ENCODE measurements at regions of chr2 and their contacts with region 1.

Region 1: DNA sequence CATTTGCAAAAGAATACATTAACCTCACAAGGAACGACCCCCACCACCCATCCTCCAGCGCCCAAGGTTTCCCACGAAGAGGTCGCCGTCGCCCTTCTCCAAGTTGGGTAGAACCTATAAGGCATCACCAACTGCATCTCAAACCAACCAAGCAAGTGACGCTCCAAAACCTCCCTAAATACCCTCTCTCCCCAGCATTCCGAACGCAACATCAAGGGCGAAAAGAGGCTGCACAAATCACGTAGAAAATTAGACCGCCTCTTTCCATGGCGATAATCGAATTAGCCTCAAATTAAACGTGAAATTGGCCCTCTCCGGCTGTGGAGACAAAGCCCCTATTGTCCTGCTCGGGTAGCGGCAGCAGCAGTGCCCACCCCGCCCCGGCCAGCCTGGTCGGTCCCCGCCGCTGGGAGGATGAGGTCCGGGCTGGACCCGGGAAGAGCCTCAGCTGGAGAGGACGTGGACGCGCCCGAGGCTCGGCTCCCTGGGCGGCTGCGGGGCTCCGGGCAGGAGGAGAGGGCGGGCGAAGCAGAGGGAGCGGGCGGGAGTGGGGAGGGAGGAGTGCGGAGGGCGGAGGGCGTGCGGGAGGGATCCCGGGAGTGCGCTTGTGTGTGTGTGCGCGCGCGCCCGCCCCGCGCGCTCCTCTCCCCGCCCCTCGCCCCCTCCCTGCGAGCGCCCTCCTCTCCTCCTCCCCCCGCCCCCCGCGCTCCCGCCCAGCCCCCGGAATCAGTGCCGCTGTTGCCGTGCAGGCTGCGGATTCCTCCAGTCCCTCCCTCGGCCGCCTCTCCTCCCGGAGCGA is at the start of gene SPTBN1:
- DNase-seq: peak; percentile 87
- ATAC-seq: peak; percentile 86
- H3K4me3 ChIP-seq: peak within 1 kb of the TSS; percentile 93 to 96 (median 93)
- H3K27ac ChIP-seq: peak within 1 kb of the TSS; percentile 82
- H3K4me1 ChIP-seq: peaks cover 40% of the 10 kb centered on the region
- H3K27me3 ChIP-seq: no peaks in the 10 kb centered on the region; a peak in 1 of 5 replicates
- CTCF ChIP-seq: 0 out of 2 replicates have a peak, but pooled peaks have one; percentile 4
- EP300 ChIP-seq: no peak; a peak in 1 of 4 replicates
- POLR2A ChIP-seq: peak; percentile 75 to 77
- RAD21 ChIP-seq: peak; percentile 31; the same call in 1 of the 2 replicates
- total RNA-seq, gene SPTBN1: 139 and 299 TPM in 2 replicates

Region 2: DNA sequence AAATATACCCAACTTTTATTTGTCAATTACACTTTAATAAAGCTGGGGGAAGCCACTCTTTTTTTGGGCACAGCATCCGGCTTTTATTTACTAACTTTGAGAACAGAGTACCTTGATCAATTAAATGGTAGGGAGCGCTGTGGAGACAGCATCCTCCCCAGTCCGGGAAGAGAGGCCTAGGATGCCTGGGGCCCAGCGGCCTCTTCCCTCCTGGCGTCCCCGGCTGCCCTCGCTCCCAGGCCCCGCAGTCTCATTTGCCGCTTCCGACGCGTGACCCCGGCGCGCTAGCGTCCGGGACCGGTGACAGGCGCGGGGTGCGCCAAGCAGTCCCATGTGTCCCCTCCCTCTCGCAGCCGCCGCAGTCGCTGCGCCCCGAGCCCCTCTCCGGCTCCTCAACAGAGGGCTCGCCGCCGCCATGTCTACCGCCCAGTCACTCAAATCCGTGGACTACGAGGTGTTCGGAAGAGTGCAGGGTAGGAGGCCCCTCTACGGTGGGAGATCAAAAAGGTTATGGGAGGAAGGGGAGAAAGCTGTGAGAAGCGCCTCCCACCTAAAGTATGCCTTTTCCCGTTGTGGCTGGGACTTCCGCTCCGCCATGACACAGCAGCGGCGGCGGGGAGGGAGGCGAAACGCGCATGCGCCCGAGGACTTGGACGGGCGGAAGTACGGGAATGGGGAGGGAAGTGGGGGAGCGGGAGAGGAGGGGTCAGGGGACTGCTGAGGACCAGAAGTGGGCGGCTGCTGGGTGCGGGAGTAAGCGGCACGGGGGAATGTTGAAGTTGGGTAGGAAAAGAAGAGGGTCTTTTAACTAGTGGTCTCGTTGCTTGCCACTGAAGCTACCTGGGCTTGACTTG is 340.3 kb before region 1 on chr2 and contains the start of gene ACYP2:
- CTCF ChIA-PET with region 1: no interaction called
- POLR2A ChIA-PET with region 1: no interaction called
- in situ Hi-C with region 1: no loop called
- intact Hi-C with region 1: loop called (anchors 2 kb)
- DNase-seq: peak; percentile 96
- ATAC-seq: peak; percentile 94
- H3K4me3 ChIP-seq: peak within 1 kb of the TSS; percentile 73 to 78 (median 75)
- H3K27ac ChIP-seq: peak within 1 kb of the TSS; percentile 94
- H3K4me1 ChIP-seq: peaks cover 18% of the 10 kb centered on the region
- H3K27me3 ChIP-seq: no peaks in the 10 kb centered on the region
- CTCF ChIP-seq: peak; percentile 60
- EP300 ChIP-seq: 0 out of 4 replicates have a peak, but pooled peaks of 1 of the 2 experiments have one; percentile 10
- POLR2A ChIP-seq: peak; percentile 94 to 98
- RAD21 ChIP-seq: peak; percentile 61
- total RNA-seq, gene ACYP2: 12.3 and 16.2 TPM in 2 replicates

Region 3: DNA sequence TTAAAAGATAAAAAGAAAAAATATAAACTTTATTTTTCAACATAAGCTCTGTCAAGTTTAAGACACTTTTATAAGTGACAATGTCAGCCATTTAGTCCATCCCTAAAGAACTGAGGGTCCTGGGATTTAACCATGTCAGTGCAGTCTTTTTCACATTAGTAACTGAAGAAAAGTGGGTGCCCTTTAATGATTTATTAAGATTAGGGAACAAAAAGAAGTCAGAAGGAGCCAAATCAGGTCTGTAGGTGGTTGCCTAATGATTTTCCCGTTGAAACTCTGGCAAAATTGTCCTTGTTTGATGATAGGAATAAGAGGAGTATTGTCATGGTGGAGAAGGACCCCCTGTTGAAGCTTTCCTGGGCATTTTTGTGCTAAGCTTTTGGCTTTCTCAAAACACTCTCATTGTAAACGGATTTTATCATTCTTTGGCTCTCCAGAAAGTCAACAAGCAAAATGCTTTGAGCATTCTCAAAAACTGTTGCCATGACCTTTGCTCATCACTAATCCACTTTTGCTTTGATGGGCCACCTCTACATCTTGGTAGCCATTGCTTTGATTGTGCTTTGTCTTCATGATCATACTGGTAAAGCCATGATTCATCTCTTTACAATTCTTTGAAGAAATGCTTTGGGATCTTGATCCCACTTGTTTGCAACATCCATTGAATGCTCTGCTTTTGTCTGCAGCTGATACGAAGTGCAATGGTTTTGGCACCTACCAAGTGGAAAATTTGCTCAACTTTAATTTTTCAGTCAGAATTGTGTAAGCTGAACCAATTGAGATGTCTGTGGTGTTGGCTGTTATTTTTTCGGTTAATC is 221.7 kb before region 1 on chr2:
- CTCF ChIA-PET with region 1: no interaction called
- POLR2A ChIA-PET with region 1: no interaction called
- in situ Hi-C with region 1: no loop called
- intact Hi-C with region 1: loop called (anchors 5 kb)
- DNase-seq: peak; percentile 100
- ATAC-seq: peak; percentile 94
- H3K4me3 ChIP-seq: no peak overlapping the region
- H3K27ac ChIP-seq: peak overlapping the region; percentile 81
- H3K4me1 ChIP-seq: peaks cover 43% of the 10 kb centered on the region
- H3K27me3 ChIP-seq: no peaks in the 10 kb centered on the region
- CTCF ChIP-seq: no peak
- EP300 ChIP-seq: peak; percentile 63 to 98; a peak in 3 of 4 replicates
- POLR2A ChIP-seq: no peak
- RAD21 ChIP-seq: no peak

Region 4: DNA sequence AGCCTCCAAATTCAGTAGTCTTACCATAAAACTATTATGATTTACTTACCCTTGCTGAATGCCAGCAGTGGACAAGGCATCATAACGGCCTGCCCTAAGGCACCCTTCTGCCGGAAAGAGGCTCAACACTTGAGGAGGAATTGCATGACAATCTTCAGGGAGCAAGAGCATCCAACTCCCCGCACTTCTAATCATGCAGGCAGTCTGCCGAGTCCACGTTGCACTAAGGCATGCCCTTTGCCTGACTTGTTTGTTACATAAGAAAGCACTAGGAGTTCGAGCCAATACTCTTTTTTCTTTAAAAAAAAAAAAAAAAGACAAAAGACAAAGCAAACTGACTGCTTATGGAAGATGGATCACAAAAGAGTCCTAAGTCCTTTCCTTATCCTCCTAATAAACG is 17.5 kb before region 1 on chr2:
- CTCF ChIA-PET with region 1: no interaction called
- POLR2A ChIA-PET with region 1: no interaction called
- in situ Hi-C with region 1: no loop called
- intact Hi-C with region 1: no loop called
- DNase-seq: no peak
- ATAC-seq: no peak
- H3K4me3 ChIP-seq: no peak overlapping the region
- H3K27ac ChIP-seq: no peak overlapping the region
- H3K4me1 ChIP-seq: peaks cover 23% of the 10 kb centered on the region
- H3K27me3 ChIP-seq: no peaks in the 10 kb centered on the region
- CTCF ChIP-seq: no peak
- EP300 ChIP-seq: no peak
- POLR2A ChIP-seq: no peak
- RAD21 ChIP-seq: no peak

Region 5: DNA sequence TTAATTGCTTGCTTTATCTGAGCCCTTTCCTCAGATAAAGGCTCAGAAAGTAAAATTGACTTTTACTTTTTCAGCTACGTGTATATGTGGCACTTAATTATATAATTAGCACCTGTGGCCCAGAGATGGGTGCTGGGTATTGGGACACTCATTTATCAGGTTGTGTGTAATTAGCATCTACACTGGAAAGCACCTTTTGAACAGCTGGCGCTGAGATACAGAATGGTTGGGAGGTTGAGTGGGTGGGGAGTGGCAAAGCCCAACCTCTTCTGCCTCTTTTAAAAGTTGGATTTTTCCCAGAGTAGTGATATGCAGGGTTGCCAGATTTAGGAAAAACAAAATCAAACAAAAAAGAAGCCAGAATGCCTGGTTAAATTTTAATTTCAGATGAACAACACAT is 24.3 kb after region 1 on chr2:
- CTCF ChIA-PET with region 1: no interaction called
- POLR2A ChIA-PET with region 1: no interaction called
- in situ Hi-C with region 1: no loop called
- intact Hi-C with region 1: loop called (anchors 2 kb)
- DNase-seq: no peak
- ATAC-seq: no peak
- H3K4me3 ChIP-seq: no peak overlapping the region
- H3K27ac ChIP-seq: no peak overlapping the region
- H3K4me1 ChIP-seq: peaks cover 80% of the 10 kb centered on the region
- H3K27me3 ChIP-seq: no peaks in the 10 kb centered on the region
- CTCF ChIP-seq: no peak
- EP300 ChIP-seq: no peak
- POLR2A ChIP-seq: no peak
- RAD21 ChIP-seq: no peak

Region 6: DNA sequence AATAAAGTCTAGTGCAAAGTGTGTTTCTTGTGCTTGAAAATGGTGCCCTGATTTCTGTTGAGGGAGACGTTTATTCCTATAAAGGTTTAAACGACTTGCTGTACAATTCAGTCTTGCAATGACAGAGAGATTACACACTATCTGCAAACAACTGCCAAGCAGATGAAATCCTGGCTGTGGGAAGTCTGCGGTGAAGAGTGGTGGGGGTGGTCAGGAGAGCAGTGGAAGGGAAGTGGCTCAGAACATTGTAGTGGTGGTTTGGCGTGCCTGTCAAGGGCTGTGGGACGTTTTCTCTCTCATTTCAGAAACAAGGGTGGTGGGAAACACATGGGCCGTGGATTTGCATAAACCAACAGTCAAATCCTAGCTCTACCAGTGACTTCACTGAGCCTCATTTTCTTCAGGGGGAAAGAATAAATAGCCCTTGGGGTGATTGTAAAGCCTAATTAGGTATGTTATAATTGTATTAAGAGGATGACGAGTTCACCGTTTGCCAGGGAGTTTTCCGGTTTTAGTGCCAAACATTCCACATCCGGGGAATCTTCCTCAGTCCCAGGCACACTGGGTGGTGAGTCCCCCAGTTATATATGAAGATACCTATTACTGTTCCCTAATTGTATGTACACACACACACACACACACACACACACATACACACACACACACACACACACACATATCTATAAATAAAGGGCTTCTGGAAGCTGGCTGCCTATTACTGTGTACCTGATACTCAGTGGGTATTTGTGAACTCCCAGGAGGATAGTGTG is 115.3 kb after region 1 on chr2:
- CTCF ChIA-PET with region 1: no interaction called
- POLR2A ChIA-PET with region 1: no interaction called
- in situ Hi-C with region 1: no loop called
- intact Hi-C with region 1: loop called (anchors 5 kb)
- DNase-seq: peak; percentile 79
- ATAC-seq: peak; percentile 69
- H3K4me3 ChIP-seq: peak overlapping the region in 2 of 3 experiments; percentile 17 to 20; a peak in 1 of 6 replicates
- H3K27ac ChIP-seq: peak overlapping the region; percentile 76
- H3K4me1 ChIP-seq: peaks cover 98% of the 10 kb centered on the region
- H3K27me3 ChIP-seq: no peaks in the 10 kb centered on the region
- CTCF ChIP-seq: no peak
- EP300 ChIP-seq: 0 out of 4 replicates have a peak, but pooled peaks of 1 of the 2 experiments have one; percentile 20
- POLR2A ChIP-seq: no peak
- RAD21 ChIP-seq: no peak